ENCODE measurements at regions of chr2 and their contacts with region 1.

Region 1: GRCh38 chr2:134375935-134376334 is 122.1 kb downstream of the MGAT5 start:
- DNase-seq: peak; percentile 32 to 94 (median 60)

Region 2: DNA sequence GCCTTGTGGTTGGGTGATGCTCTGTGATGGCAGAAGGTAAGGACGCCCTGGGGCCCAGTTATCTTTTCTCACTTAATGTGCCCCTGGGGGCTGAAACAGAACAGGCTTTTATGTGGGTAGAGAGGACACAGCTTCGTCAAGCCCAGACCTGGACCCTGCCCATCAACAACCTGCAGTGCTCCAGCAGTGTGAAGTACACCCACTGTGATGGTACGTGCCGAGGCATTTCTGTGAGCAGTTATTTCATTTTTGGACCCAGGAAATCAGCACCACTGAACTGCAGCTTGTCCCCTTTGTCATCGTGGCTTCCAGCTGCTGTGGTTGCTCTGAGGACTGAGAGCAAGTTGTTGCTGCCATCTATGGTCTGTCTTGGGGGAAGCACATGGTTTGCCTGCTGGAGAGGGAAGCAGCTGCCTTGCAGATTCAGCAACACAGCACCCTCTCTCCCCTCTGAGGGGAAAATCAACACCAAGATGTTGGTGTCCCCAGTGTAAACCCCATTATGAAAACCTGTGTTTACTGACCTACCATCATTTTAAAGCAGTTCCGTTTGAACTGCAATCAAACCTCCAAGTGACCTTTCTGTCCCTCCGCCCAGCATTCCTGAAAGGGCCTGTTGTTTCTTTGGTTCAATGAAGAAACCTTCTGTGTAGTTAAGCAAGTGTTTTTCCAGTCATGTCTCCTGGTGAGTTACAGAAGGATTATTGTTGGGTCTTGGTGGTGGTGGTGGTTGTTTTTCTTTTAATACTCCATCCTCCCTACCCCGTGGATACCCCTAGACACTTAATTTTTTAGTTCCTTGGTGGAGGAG is 36.1 kb after region 1 on chr2:
- intact Hi-C with region 1: loop called (anchors 5 kb)
- DNase-seq: peak; percentile 71 to 97 (median 82)

Region 3: DNA sequence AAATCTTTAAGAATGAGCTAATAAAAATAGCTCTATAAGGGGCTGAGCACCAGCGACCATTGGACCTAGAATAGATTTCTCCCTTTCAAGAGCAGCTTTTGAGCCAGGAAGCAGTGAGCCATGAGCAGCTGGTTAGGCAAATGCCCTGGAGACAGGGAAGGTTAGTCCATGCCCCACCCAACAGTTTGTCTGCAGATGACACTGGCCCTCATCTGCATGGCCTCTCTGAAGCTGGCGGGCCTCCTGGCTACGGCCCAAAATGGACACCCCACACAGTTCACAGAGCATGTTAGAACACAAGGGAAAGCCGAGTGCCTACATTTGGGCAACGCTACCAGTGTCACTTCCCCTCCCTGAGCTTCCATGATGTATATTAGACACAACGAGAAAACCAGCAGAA is 79.0 kb after region 1 on chr2:
- intact Hi-C with region 1: loop called (anchors 5 kb)
- DNase-seq: peak in 1 of 10 donors; percentile 43

Measured in posterior cingulate gyrus (tissue), 11 donors.